RWPE1 (cell line): ENCODE measurements at regions of chr2 and their contacts with region 1.

Region 1: GRCh38 chr2:113248997-113249770 is 29.5 kb downstream of the PAX8 start:
- DNase-seq: peak; percentile 74
- H3K27ac ChIP-seq: peak overlapping the region; percentile 45
- CTCF ChIP-seq: peak; percentile 90

Region 2: GRCh38 chr2:113370478-113371091 is 121.4 kb after region 1 on chr2:
- CTCF ChIA-PET with region 1: interaction called, 12 read pairs
- POLR2A ChIA-PET with region 1: no interaction called
- DNase-seq: peak; percentile 76
- H3K27ac ChIP-seq: no peak overlapping the region
- CTCF ChIP-seq: peak; percentile 70

Region 3: GRCh38 chr2:113390124-113390849 is 141.1 kb after region 1 on chr2:
- CTCF ChIA-PET with region 1: interaction called, 14 read pairs
- POLR2A ChIA-PET with region 1: no interaction called
- DNase-seq: peak; percentile 45
- H3K27ac ChIP-seq: no peak overlapping the region
- CTCF ChIP-seq: peak; percentile 92